K562 (cell line): ENCODE measurements at regions of chr2 and their contacts with region 1.

Region 1: DNA sequence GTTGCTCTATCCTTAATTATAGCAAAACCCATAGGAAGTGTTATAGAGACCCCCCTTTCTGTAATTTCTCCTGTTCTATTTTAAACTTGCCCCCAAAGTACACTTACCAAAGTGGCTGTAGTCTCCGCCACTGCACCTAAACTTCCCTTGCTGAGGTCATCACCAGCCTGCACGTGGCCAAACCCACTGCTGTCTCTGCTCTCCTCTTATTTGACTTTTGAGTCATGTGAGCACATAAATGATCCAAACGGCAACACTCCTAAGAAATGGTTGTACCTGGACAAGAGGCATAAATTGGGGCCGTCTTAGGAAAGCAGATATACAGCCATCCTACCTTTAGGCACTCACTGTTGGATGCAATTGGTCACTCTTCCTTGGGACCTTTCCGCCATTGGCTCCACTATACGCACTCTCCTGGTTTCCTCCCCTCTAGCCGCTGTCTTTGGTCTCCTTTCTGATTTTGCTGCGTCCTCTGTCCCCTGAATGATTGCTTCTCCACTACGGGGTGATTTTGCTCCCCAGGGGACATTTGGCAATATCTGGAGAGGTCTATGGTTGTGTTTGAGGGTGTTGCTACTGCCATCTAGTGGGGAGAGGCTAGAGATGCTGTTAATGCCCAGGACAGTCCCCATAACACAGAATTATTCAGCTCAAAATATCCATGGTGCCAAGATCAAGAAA is 19.2 kb upstream of the IL36G start:
- DNase-seq: peak; percentile 75 to 81 (median 78)
- ATAC-seq: peak; percentile 97
- H3K4me3 ChIP-seq: no peak overlapping the region
- H3K27ac ChIP-seq: no peak overlapping the region
- H3K4me1 ChIP-seq: no peaks in the 10 kb centered on the region; a peak in 1 of 5 replicates
- H3K27me3 ChIP-seq: peaks cover 21 to 29% of the 10 kb centered on the region in 2 experiments
- CTCF ChIP-seq: peak; percentile 82 to 93 (median 90)
- EP300 ChIP-seq: no peak
- POLR2A ChIP-seq: no peak
- RAD21 ChIP-seq: peak; percentile 70 to 78

Region 2: DNA sequence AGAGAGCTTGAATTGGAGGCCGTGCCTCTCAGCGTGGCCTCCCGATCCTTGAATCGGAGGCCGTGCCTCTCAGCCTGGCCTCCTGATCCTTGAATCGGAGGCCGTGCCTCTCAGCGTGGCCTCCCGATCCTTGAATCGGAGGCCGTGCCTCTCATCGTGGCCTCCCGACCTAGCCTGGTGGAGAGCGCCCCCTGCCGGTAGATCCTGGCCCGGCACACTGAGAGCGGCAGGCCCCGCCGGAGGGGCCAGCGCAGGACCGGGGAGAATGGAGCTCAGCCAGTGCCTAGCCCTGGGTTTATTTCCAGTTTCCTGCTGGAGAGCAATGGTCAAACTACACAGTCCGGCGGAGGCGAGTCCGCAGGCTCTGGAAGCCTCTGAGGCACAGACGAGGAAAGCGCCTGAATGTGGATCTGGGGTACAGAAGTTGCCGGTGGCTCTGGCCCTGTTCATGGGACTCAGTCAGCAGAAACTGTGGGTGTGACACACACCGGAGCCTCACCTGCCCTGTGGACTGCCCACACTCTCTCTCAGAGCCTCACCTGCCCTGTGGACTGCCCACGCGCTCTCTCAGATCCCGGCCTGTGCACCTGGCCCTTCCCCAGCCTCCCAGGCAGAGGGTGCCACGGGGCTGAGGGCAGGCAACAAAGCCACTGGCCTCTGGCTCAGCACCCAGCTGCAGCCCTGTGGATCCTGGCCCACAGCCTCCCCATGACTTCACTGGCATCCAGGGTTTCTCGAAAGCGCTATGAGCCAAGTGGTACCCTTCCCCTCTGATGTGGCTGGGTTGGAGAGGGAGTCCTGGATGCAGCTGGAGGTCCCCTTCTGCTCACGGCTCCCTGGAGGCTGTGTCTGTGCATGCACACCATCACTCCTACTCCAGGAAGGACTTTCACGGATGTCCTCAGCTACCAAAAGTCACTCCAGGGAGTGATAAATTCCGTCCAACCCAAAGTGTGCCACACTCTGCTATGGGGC is 92.6 kb after region 1 on chr2:
- CTCF ChIA-PET with region 1: no interaction called
- POLR2A ChIA-PET with region 1: no interaction called
- in situ Hi-C with region 1: no loop called
- intact Hi-C with region 1: loop called (anchors 5 kb)
- DNase-seq: peak; percentile 40 to 64 (median 61)
- ATAC-seq: peak; percentile 75
- H3K4me3 ChIP-seq: no peak overlapping the region
- H3K27ac ChIP-seq: no peak overlapping the region
- H3K4me1 ChIP-seq: peaks cover 0 to 8% of the 10 kb centered on the region in 2 experiments; a peak in 1 of 5 replicates
- H3K27me3 ChIP-seq: peaks cover 0 to 14% of the 10 kb centered on the region in 2 experiments; a peak in 2 of 5 replicates
- CTCF ChIP-seq: peak; percentile 71 to 89 (median 73)
- EP300 ChIP-seq: no peak
- POLR2A ChIP-seq: no peak
- RAD21 ChIP-seq: peak; percentile 60 to 83